ENCODE measurements at regions of chr9 and their contacts with region 1.

Region 1: GRCh38 chr9:28774416-28775235 is 1201.3 kb upstream of the C9orf72 start:
- DNase-seq: no peak
- ATAC-seq: peak in 1 of 3 donors; percentile 26
- H3K4me3 ChIP-seq: no peak overlapping the region
- H3K4me3 Mint-ChIP-seq: no peak overlapping the region
- H3K27ac ChIP-seq: no peak overlapping the region
- H3K27ac Mint-ChIP-seq: no peak overlapping the region
- H3K4me1 ChIP-seq: no peaks in the 10 kb centered on the region
- H3K4me1 Mint-ChIP-seq: peaks cover 0 to 13% of the 10 kb centered on the region in 2 donors
- H3K27me3 ChIP-seq: no peaks in the 10 kb centered on the region
- H3K27me3 Mint-ChIP-seq: no peaks in the 10 kb centered on the region
- CTCF ChIP-seq: peak; percentile 64

Region 2: DNA sequence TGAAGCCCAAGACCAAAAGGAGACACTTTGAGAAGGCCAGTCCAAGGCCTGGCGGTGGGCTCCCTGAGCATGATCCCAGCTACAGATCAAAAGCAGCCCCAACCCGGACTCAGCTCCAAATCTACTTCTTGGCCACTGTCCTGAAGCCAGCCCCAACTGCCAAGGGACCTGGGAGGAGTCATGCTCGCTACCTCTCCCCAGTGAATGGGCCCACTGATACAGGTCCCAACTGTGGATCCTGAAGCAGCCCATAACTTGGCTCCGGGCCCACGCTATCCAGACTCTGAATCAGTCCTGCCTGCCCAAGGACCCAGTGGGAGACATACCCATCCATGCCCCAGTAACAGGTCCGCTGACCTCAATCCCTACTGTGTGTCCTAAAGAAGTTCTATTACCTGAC is 343.9 kb after region 1 on chr9:
- intact Hi-C with region 1: no loop called
- DNase-seq: no peak
- ATAC-seq: no peak
- H3K4me3 ChIP-seq: no peak overlapping the region
- H3K4me3 Mint-ChIP-seq: no peak overlapping the region
- H3K27ac ChIP-seq: no peak overlapping the region
- H3K27ac Mint-ChIP-seq: no peak overlapping the region
- H3K4me1 ChIP-seq: no peaks in the 10 kb centered on the region
- H3K4me1 Mint-ChIP-seq: peaks cover 0 to 33% of the 10 kb centered on the region in 2 donors
- H3K27me3 ChIP-seq: no peaks in the 10 kb centered on the region
- H3K27me3 Mint-ChIP-seq: no peaks in the 10 kb centered on the region
- CTCF ChIP-seq: no peak

Region 3: GRCh38 chr9:29691758-29692407 is 917.3 kb after region 1 on chr9:
- intact Hi-C with region 1: loop called (anchors 5 kb)
- DNase-seq: no peak
- ATAC-seq: peak in 2 of 3 donors; percentile 39 to 67
- H3K4me3 ChIP-seq: no peak overlapping the region
- H3K4me3 Mint-ChIP-seq: no peak overlapping the region
- H3K27ac ChIP-seq: no peak overlapping the region
- H3K27ac Mint-ChIP-seq: no peak overlapping the region
- H3K4me1 ChIP-seq: no peaks in the 10 kb centered on the region
- H3K4me1 Mint-ChIP-seq: no peaks in the 10 kb centered on the region
- H3K27me3 ChIP-seq: no peaks in the 10 kb centered on the region
- H3K27me3 Mint-ChIP-seq: no peaks in the 10 kb centered on the region
- CTCF ChIP-seq: peak; percentile 37

Measured in natural killer cell (primary cell).